ENCODE measurements at regions of chr3 and their contacts with region 1.

Region 1: GRCh38 chr3:87792534-87793336 is 266.1 kb downstream of the CGGBP1 start:
- DNase-seq: peak; percentile 21
- CTCF ChIP-seq: no peak

Region 2: DNA sequence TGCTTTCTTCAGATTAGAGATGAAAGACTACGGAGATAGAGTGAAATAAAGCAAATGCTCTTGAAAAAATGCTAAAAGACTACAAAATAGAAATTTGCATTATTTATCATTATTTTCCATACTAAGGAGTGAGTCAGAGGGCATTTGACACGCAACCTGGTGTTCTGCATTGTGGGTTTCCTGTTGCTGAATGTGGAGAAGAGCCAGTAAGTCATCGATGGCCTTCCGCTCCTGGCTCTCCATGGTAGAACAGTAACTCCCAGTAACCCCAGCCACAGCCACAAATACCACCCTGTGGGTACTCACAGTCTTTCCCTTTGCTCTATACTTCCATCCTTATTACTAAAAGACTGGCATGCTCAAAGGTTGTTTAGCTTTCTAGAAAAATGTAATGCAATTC is 204.6 kb after region 1 on chr3:
- in situ Hi-C with region 1: loop called (anchors 25 kb)
- DNase-seq: no peak
- CTCF ChIP-seq: no peak

Measured in GM13976 (cell line).